GM10248 (cell line): ENCODE measurements at regions of chr22 and their contacts with region 1.

Region 1: DNA sequence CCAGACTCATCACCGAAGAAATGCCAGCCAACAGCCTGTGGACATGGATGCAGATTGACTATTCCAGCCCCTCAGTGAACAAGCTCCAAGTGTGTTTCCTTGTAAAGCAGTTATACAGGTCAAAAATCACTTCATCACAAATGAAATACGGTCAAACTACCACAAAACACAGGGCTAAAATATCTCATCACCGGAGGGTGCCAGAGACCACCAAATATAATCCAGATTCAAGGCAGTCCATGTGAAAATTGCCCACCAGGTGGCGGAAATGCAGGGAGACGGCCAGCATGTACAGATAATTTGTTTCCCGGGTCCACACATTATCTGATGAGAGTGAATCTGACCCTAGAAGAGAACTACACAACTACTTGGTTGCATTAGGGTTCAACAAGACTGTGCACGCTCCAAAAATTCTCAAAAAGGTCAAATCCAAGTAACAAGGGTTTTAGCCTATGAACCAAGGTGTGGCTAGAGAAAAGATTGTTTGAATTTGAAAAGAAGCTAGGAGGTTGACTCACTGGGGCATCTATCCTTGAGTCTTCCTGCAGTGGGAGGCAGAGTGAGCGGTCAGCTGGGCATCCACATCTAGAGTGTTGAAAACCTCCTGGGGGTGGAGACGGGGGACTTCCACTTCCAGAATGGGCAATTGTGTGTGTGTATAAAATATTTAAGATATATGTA is 71.7 kb downstream of the IGLL5 start:
- DNase-seq: peak; percentile 63
- CTCF ChIP-seq: peak; percentile 88

Region 2: GRCh38 chr22:22770280-22770871 is 188.9 kb before region 1 on chr22:
- CTCF ChIA-PET with region 1: interaction called, 50 read pairs
- POLR2A ChIA-PET with region 1: no interaction called
- DNase-seq: no peak
- CTCF ChIP-seq: peak; percentile 65

Region 3: GRCh38 chr22:22810018-22810427 is 149.3 kb before region 1 on chr22:
- CTCF ChIA-PET with region 1: interaction called, 66 read pairs
- POLR2A ChIA-PET with region 1: no interaction called
- DNase-seq: peak; percentile 53
- CTCF ChIP-seq: peak; percentile 61

Region 4: GRCh38 chr22:22870577-22871404 is 88.5 kb before region 1 on chr22:
- CTCF ChIA-PET with region 1: interaction called, 12 read pairs
- POLR2A ChIA-PET with region 1: no interaction called
- DNase-seq: no peak
- CTCF ChIP-seq: peak; percentile 38

Region 5: DNA sequence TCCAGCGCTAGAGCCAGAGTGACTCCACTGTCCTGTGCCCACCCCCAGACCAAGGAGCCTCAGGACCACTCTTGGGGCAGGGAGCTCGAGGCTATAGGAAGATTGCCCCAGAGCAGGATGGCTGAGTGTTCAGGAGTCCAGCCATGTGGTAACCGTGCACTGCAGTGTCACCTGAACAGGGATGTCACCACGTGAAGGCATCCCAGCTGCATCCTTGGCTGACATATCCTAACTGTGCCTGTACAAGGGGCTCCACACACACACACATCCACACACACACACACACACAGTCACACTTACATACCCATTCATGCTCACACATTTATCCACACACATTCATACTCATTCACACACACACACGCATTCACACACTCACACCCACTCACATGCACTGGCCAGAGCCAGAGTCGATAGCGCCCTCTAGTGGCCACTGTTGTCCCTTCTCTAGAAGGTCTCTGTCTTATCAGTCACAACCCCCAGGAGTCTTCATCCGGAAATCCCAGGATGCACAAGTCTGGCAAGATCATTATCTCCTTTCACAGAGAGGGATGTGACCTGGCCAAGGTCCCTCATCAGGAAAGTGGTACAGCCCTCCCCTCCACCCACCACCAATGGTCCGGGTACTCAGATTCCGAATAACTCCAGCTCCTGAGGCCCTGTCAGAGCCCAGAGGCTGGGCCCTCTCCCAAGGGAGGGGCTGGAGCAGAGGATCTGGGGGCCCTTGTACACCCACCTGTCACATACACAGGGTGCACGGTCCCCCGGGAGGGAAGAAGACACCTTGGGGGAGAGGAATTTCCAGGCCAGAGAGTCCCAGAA is 16.6 kb before region 1 on chr22:
- CTCF ChIA-PET with region 1: interaction called, 85 read pairs
- POLR2A ChIA-PET with region 1: no interaction called
- DNase-seq: peak; percentile 69
- CTCF ChIP-seq: peak; percentile 69

Region 6: GRCh38 chr22:23094695-23095681 is 135.7 kb after region 1 on chr22:
- CTCF ChIA-PET with region 1: no interaction called
- POLR2A ChIA-PET with region 1: no interaction called
- DNase-seq: no peak
- CTCF ChIP-seq: no peak

Region 7: DNA sequence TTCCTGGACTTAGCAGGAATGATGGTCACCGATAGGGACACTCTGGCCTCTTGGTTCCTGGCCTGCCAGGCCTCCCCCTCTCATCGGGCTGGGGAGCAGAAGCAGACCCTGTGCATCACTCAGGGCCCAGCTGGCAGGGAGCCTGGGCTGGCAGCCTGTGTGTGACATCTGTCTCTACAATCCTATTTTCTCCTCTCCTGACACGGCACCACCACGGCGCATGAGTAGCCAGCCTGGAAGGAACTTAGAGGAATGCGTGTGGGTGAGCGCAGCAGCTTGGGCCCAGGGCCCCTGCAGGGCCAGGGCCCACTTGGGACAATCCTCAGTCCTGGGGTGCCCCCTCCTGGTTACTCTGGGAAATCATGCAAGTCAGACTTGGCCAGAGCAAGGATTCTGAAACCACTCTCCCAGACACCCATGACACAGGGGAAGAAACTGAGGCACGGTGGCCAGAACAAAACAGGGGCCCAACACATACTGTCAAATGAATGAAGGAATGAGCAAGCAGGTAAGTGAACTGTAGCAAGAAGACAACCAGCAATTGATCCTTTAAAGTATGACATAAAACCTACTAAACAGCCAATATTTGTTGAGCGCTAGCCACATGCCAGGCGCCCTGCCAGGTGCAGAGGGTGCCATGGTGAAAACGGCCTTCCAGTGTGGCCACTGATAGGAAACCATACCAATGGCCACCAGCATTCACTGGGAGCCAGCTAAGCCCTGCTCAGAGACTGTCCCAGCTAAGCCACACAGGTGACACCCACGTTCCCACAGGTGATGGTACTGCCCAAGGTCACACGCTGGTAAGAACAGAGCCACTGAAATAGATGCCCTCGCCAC is 169.2 kb after region 1 on chr22:
- CTCF ChIA-PET with region 1: interaction called, 214 read pairs
- POLR2A ChIA-PET with region 1: no interaction called
- DNase-seq: peak; percentile 88
- CTCF ChIP-seq: peak; percentile 71

Region 8: DNA sequence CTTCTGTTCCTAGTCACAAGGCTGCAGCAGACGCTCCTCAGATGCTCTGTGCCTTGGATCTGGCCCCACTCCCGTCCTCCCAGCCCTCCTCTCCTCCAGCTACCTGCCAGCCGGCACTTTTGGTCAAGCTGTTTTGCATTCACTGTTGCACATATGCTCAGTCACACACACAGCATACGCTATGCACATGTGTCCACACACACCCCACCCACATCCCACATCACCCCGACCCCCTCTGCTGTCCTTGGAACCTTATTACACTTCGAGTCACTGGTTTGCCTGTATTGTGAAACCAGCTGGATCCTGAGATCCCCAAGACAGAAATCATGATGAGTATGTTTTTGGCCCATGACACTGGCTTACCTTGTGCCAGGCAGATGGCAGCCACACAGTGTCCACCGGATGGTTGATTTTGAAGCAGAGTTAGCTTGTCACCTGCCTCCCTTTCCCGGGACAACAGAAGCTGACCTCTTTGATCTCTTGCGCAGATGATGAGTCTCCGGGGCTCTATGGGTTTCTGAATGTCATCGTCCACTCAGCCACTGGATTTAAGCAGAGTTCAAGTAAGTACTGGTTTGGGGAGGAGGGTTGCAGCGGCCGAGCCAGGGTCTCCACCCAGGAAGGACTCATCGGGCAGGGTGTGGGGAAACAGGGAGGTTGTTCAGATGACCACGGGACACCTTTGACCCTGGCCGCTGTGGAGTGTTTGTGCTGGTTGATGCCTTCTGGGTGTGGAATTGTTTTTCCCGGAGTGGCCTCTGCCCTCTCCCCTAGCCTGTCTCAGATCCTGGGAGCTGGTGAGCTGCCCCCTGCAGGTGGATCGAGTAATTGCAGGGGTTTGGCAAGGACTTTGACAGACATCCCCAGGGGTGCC is 330.8 kb after region 1 on chr22:
- CTCF ChIA-PET with region 1: interaction called, 53 read pairs
- POLR2A ChIA-PET with region 1: no interaction called
- DNase-seq: peak; percentile 81
- CTCF ChIP-seq: peak; percentile 57